ENCODE measurements at regions of chrX and their contacts with region 1.

Region 1: GRCh38 chrX:103806862-103807474 is 25.1 kb downstream of the RAB9B start:
- DNase-seq: no peak
- H3K4me3 Mint-ChIP-seq: no peak overlapping the region
- H3K27ac Mint-ChIP-seq: no peak overlapping the region
- H3K4me1 Mint-ChIP-seq: peaks cover 15% of the 10 kb centered on the region
- H3K27me3 Mint-ChIP-seq: peaks cover 4% of the 10 kb centered on the region

Region 2: DNA sequence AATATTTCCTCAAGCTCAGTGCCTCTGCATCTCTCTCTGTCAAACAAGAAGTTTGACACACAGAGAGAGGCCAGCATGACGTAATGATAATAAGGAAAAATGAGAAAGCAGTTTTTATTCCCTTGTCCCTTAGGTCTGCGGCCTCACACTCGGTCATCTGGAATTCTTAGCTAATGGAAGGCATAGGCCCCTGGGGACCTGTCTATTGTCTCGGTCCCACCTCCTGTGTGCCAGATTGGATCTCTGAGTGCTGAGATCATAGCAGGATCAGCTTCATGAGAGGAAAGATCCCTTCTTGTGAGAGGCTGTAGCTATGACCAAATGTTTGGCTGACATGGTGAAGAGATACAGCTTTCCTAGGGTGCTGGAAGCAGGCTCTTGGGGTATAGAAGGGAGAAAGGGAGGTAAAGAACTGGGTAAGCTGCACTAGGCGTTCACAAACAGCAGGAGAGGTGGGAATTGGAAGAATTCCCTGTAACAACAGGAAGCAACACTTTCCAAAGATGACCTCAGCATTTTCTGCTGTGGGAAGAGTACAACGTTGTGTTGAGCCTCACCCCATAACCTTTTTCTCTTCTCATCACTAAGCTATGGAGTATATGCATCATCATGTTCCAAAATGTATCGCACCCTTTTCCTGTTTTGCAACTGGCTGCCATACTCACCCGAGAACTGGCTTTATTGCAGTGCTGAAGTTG is 76.0 kb before region 1 on chrX:
- intact Hi-C with region 1: loop called (anchors 10 kb)
- DNase-seq: no peak
- H3K4me3 Mint-ChIP-seq: no peak overlapping the region
- H3K27ac Mint-ChIP-seq: no peak overlapping the region
- H3K4me1 Mint-ChIP-seq: peaks cover 10% of the 10 kb centered on the region
- H3K27me3 Mint-ChIP-seq: peaks cover 12% of the 10 kb centered on the region

Measured in activated T-helper 2 cell treated with anti-CD3 and anti-CD28 coated beads, Interferon-gamma antibody, Interleukin-2, Interleukin-4, amounts not matched to agents 10 μg/mL and 5 μg/mL and 100 μg/mL, durations not matched to agents 14 hours and 24 hours and 36 hours (primary cell).